Activated CD8-positive, alpha-beta T cell treated with anti-CD3 and anti-CD28 coated beads, Interleukin-2, amount 10 ng/mL, durations not matched to agents 7 days and 5 days (primary cell): ENCODE measurements at regions of chr9 and their contacts with region 1.

Region 1: GRCh38 chr9:33415501-33416038 is 13.2 kb upstream of the AQP7 start:
- DNase-seq: peak; percentile 96
- ATAC-seq: peak; percentile 95
- H3K4me3 Mint-ChIP-seq: peak overlapping the region; percentile 48
- H3K27ac Mint-ChIP-seq: peak overlapping the region; percentile 94
- H3K4me1 Mint-ChIP-seq: peaks cover 50% of the 10 kb centered on the region
- H3K27me3 Mint-ChIP-seq: peaks cover 7% of the 10 kb centered on the region

Region 2: DNA sequence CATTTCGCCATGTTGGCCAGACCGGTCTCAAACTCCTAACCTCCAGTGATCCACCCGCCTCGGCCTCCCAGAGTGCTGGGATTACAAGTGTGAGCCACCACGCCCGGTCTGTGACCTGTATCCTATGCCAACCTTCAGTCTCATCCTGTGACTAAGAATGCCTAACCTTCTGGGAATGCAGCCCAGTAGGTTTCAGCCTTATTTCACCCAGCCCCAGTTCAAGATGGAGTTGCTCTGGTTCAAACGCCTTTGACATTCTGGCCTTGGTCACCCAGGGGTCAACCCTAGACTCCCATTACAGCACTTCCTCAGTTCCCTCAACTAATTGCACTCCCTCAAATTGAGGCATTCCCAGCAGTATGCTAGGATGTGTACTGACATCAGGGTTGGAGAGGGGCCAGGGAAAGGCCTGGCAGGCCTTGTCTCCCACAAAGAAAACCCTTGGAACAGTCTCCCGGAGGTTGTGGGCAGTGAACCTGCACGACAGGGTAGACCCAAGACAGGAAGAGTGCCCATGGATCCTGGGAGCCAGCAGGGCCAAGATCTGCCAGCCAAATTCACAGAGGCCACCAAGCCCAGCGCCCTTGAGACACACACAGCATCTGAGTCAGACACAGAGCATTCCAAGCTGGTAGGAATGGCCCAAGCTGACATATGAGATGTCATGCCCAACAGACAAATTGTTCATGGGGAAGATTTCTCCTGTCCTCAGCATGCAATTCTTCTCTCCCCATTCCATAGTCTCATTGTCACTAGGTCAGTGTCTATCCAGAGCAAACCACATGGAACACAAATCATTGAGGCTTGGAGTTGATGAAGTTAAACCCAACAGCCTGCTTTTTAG is 314.2 kb before region 1 on chr9:
- CTCF ChIA-PET with region 1: no interaction called
- POLR2A ChIA-PET with region 1: no interaction called
- DNase-seq: no peak
- ATAC-seq: no peak
- H3K4me3 Mint-ChIP-seq: no peak overlapping the region
- H3K27ac Mint-ChIP-seq: no peak overlapping the region
- H3K4me1 Mint-ChIP-seq: peaks cover 13% of the 10 kb centered on the region
- H3K27me3 Mint-ChIP-seq: no peaks in the 10 kb centered on the region

Region 3: GRCh38 chr9:33374634-33375213 is 40.8 kb before region 1 on chr9:
- CTCF ChIA-PET with region 1: interaction called, 84 read pairs
- POLR2A ChIA-PET with region 1: interaction called, 3 read pairs
- DNase-seq: peak; percentile 81
- ATAC-seq: peak; percentile 85
- H3K4me3 Mint-ChIP-seq: no peak overlapping the region
- H3K27ac Mint-ChIP-seq: peak overlapping the region; percentile 35
- H3K4me1 Mint-ChIP-seq: peaks cover 12% of the 10 kb centered on the region
- H3K27me3 Mint-ChIP-seq: no peaks in the 10 kb centered on the region

Region 4: GRCh38 chr9:33430942-33431341 is 15.4 kb after region 1 on chr9:
- CTCF ChIA-PET with region 1: interaction called, 29 read pairs
- POLR2A ChIA-PET with region 1: interaction called, 5 read pairs
- DNase-seq: no peak
- ATAC-seq: no peak
- H3K4me3 Mint-ChIP-seq: no peak overlapping the region
- H3K27ac Mint-ChIP-seq: no peak overlapping the region
- H3K4me1 Mint-ChIP-seq: peaks cover 3% of the 10 kb centered on the region
- H3K27me3 Mint-ChIP-seq: peaks cover 2% of the 10 kb centered on the region

Region 5: GRCh38 chr9:33452828-33453271 is 37.3 kb after region 1 on chr9:
- CTCF ChIA-PET with region 1: interaction called, 209 read pairs
- POLR2A ChIA-PET with region 1: interaction called, 33 read pairs
- DNase-seq: peak; percentile 68
- ATAC-seq: peak; percentile 77
- H3K4me3 Mint-ChIP-seq: no peak overlapping the region
- H3K27ac Mint-ChIP-seq: peak overlapping the region; percentile 84
- H3K4me1 Mint-ChIP-seq: peaks cover 62% of the 10 kb centered on the region
- H3K27me3 Mint-ChIP-seq: no peaks in the 10 kb centered on the region

Region 6: DNA sequence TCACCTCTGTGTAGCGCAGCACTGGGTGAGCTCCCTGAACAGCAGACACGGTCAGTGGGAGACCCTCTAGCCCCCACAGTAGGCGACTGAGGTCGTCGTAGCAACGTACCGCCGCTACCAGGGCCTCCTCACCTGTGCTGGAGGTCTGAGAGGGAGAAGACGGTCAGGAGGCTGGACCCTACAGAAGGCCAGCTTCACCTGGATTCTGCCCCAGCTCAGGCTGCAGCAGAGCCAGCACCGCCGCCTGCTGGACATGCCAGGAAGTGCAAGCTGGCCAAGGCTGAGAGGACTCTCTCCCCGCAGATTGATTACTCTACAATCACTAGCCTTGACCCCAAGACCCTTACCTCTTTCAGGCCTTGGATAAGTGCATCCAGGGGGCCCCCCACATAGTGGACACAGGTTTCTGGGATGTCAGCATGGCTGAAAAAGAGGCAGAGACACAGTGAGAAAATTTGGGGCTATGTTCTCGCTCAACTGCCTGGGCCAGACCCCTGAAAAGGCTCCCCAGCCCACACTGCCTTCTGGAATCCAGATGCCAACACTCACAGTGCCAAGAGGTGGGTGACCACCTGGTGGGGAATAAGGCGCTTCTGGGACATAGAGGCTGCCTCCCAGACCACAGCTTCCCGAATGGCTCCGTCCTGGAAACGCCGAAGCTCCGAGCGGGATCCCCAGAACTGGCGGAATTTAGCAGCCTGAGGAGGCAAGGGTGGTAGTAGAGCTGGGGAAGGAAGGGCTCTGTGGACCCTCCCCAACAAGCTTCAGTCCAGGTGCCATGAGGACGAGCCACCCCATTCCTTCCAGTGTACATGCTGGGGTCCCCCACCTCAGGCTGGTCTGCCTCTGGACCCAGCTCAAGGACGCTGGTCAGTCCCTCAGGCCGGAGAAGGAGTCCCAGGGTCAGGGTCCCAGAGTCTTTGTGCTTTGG is 51.3 kb after region 1 on chr9:
- CTCF ChIA-PET with region 1: interaction called, 94 read pairs
- POLR2A ChIA-PET with region 1: interaction called, 10 read pairs
- DNase-seq: peak; percentile 79
- ATAC-seq: peak; percentile 71
- H3K4me3 Mint-ChIP-seq: no peak overlapping the region
- H3K27ac Mint-ChIP-seq: peak overlapping the region; percentile 25
- H3K4me1 Mint-ChIP-seq: peaks cover 7% of the 10 kb centered on the region
- H3K27me3 Mint-ChIP-seq: no peaks in the 10 kb centered on the region